ENCODE measurements at regions of chr1 and their contacts with region 1.

Region 1: GRCh38 chr1:204806943-204807687 is 63.5 kb upstream of the NFASC start:
- DNase-seq: peak; percentile 94
- ATAC-seq: peak; percentile 95
- H3K4me3 ChIP-seq: peak overlapping the region in 4 of 5 experiments; percentile 29 to 73 (median 56)
- H3K4me3 Mint-ChIP-seq: peak overlapping the region; percentile 87
- H3K27ac ChIP-seq: no peak overlapping the region
- H3K27ac Mint-ChIP-seq: peak overlapping the region; percentile 70
- H3K4me1 ChIP-seq: peaks cover 15 to 22% of the 10 kb centered on the region in 2 donors
- H3K4me1 Mint-ChIP-seq: peaks cover 18% of the 10 kb centered on the region
- H3K27me3 ChIP-seq: no peaks in the 10 kb centered on the region
- H3K27me3 Mint-ChIP-seq: peaks cover 3% of the 10 kb centered on the region
- CTCF ChIP-seq: peak; percentile 100

Region 2: GRCh38 chr1:204013052-204013451 is 794.1 kb before region 1 on chr1:
- CTCF ChIA-PET with region 1: no interaction called
- POLR2A ChIA-PET with region 1: no interaction called
- intact Hi-C with region 1: no loop called
- DNase-seq: no peak
- ATAC-seq: no peak
- H3K4me3 ChIP-seq: no peak overlapping the region
- H3K4me3 Mint-ChIP-seq: no peak overlapping the region
- H3K27ac ChIP-seq: no peak overlapping the region
- H3K27ac Mint-ChIP-seq: no peak overlapping the region
- H3K4me1 ChIP-seq: no peaks in the 10 kb centered on the region
- H3K4me1 Mint-ChIP-seq: no peaks in the 10 kb centered on the region
- H3K27me3 ChIP-seq: peaks cover 0 to 7% (median 0%) of the 10 kb centered on the region in 4 experiments
- H3K27me3 Mint-ChIP-seq: peaks cover 13% of the 10 kb centered on the region
- CTCF ChIP-seq: no peak

Region 3: DNA sequence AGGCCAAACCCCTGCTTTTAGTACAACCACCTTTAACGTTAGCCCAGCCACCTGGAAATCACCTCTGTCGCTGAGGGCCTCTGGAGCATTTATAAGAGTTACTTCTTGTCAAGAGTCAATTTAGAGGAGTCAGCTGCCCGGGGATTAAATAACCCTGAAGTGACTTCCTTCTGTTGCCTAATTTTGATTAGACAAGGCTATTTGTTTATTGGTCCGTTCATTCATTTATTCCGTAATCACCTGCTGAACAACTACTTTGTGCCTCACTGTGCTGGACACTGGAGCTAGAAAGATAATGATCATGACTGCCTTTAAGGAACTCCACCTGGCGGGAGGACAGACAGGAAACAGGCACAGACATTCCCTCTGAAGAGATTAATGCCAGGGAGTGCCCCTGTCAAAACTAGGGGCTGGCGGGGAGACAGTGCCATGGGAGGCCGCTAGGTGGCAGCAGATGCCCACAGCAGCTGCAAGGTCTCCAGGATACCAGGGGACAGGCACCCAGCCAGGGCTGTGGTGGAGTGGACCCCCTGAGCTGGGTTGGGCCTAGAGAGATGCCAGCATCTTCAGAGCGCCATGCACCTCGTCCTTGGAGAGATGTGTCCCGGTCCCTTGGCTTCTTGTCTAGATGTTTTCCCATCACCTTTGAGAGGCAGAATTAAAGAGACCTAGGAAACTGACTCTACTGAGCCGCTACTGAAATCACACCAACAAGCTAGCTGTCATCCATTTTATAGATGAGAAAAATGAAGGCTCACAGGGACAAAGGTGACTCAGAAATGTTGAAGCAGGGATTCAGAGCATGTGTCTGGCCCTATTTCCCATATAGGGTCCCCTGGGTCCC is 644.7 kb before region 1 on chr1:
- CTCF ChIA-PET with region 1: interaction called, 23 read pairs
- POLR2A ChIA-PET with region 1: no interaction called
- intact Hi-C with region 1: no loop called
- DNase-seq: peak; percentile 78
- ATAC-seq: peak; percentile 92
- H3K4me3 ChIP-seq: no peak overlapping the region
- H3K4me3 Mint-ChIP-seq: no peak overlapping the region
- H3K27ac ChIP-seq: no peak overlapping the region
- H3K27ac Mint-ChIP-seq: no peak overlapping the region
- H3K4me1 ChIP-seq: no peaks in the 10 kb centered on the region
- H3K4me1 Mint-ChIP-seq: no peaks in the 10 kb centered on the region
- H3K27me3 ChIP-seq: peaks cover 0 to 17% (median 3%) of the 10 kb centered on the region in 4 experiments
- H3K27me3 Mint-ChIP-seq: peaks cover 32% of the 10 kb centered on the region
- CTCF ChIP-seq: peak; percentile 98

Region 4: GRCh38 chr1:204177133-204177532 is 630.0 kb before region 1 on chr1:
- CTCF ChIA-PET with region 1: no interaction called
- POLR2A ChIA-PET with region 1: no interaction called
- intact Hi-C with region 1: no loop called
- DNase-seq: no peak
- ATAC-seq: no peak
- H3K4me3 ChIP-seq: no peak overlapping the region
- H3K4me3 Mint-ChIP-seq: no peak overlapping the region
- H3K27ac ChIP-seq: no peak overlapping the region
- H3K27ac Mint-ChIP-seq: no peak overlapping the region
- H3K4me1 ChIP-seq: no peaks in the 10 kb centered on the region
- H3K4me1 Mint-ChIP-seq: no peaks in the 10 kb centered on the region
- H3K27me3 ChIP-seq: peaks cover 0 to 8% (median 0%) of the 10 kb centered on the region in 4 experiments
- H3K27me3 Mint-ChIP-seq: peaks cover 15% of the 10 kb centered on the region
- CTCF ChIP-seq: no peak

Region 5: GRCh38 chr1:204494281-204495077 is 312.6 kb before region 1 on chr1 and contains the start of gene PIK3C2B:
- CTCF ChIA-PET with region 1: interaction called, 16 read pairs
- POLR2A ChIA-PET with region 1: no interaction called
- intact Hi-C with region 1: no loop called
- DNase-seq: peak; percentile 87
- ATAC-seq: peak; percentile 81
- H3K4me3 ChIP-seq: peak within 1 kb of the TSS; percentile 84 to 98 (median 92)
- H3K4me3 Mint-ChIP-seq: peak within 1 kb of the TSS; percentile 97
- H3K27ac ChIP-seq: peak within 1 kb of the TSS; percentile 78 to 79
- H3K27ac Mint-ChIP-seq: peak within 1 kb of the TSS; percentile 96
- H3K4me1 ChIP-seq: peaks cover 73 to 88% of the 10 kb centered on the region in 2 donors
- H3K4me1 Mint-ChIP-seq: peaks cover 80% of the 10 kb centered on the region
- H3K27me3 ChIP-seq: no peaks in the 10 kb centered on the region
- H3K27me3 Mint-ChIP-seq: no peaks in the 10 kb centered on the region
- CTCF ChIP-seq: peak; percentile 61
- total RNA-seq, gene PIK3C2B: 90.3 and 93.7 TPM in 2 replicates

Region 6: DNA sequence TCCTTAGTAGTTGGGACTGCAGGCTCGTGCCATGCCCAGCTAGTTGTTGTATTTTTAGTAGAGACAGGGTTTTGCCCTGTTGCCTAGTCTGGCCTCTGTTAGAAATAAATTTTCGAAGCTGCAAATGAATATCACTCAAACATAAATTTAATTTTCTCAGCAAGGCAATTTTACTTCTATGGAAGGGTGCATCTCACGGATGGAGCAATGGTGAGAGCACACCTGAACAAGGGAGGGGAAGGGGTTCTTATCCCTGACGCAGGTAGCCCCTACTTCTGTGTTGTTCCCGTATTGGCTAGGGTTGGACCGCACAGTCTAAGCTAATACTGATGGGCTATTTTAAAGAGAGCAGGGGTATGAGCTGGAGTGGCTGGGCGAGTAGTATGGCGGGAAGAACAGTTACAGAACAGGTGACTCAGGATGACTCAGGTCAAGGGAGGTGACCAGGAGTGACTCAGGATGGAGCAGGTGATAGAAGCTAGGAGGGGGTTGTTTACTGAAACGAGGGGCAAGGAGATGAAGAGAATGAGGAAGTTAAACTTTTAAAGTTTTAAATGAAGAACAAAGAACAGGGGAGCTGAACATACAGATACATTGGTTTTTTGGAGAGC is 283.4 kb before region 1 on chr1:
- CTCF ChIA-PET with region 1: interaction called, 11 read pairs
- POLR2A ChIA-PET with region 1: no interaction called
- intact Hi-C with region 1: no loop called
- DNase-seq: peak; percentile 48
- ATAC-seq: peak; percentile 19
- H3K4me3 ChIP-seq: peak overlapping the region in 1 of 5 experiments; percentile 6
- H3K4me3 Mint-ChIP-seq: peak overlapping the region; percentile 62
- H3K27ac ChIP-seq: peak overlapping the region in 1 of 2 donors; percentile 67
- H3K27ac Mint-ChIP-seq: peak overlapping the region; percentile 89
- H3K4me1 ChIP-seq: peaks cover 59 to 65% of the 10 kb centered on the region in 2 donors
- H3K4me1 Mint-ChIP-seq: peaks cover 50% of the 10 kb centered on the region
- H3K27me3 ChIP-seq: no peaks in the 10 kb centered on the region
- H3K27me3 Mint-ChIP-seq: no peaks in the 10 kb centered on the region
- CTCF ChIP-seq: no peak

Region 7: GRCh38 chr1:204565617-204566582 is 241.2 kb before region 1 on chr1:
- CTCF ChIA-PET with region 1: interaction called, 221 read pairs
- POLR2A ChIA-PET with region 1: interaction called, 4 read pairs
- intact Hi-C with region 1: no loop called
- DNase-seq: peak; percentile 85
- ATAC-seq: peak; percentile 75
- H3K4me3 ChIP-seq: no peak overlapping the region
- H3K4me3 Mint-ChIP-seq: peak overlapping the region; percentile 49
- H3K27ac ChIP-seq: peak overlapping the region; percentile 33 to 63
- H3K27ac Mint-ChIP-seq: peak overlapping the region; percentile 67
- H3K4me1 ChIP-seq: peaks cover 24 to 33% of the 10 kb centered on the region in 2 donors
- H3K4me1 Mint-ChIP-seq: peaks cover 43% of the 10 kb centered on the region
- H3K27me3 ChIP-seq: no peaks in the 10 kb centered on the region
- H3K27me3 Mint-ChIP-seq: no peaks in the 10 kb centered on the region
- CTCF ChIP-seq: peak; percentile 80

Region 8: GRCh38 chr1:204673909-204674649 is 133.0 kb before region 1 on chr1:
- CTCF ChIA-PET with region 1: no interaction called
- POLR2A ChIA-PET with region 1: no interaction called
- intact Hi-C with region 1: no loop called
- DNase-seq: no peak
- ATAC-seq: no peak
- H3K4me3 ChIP-seq: no peak overlapping the region
- H3K4me3 Mint-ChIP-seq: no peak overlapping the region
- H3K27ac ChIP-seq: no peak overlapping the region
- H3K27ac Mint-ChIP-seq: no peak overlapping the region
- H3K4me1 ChIP-seq: no peaks in the 10 kb centered on the region
- H3K4me1 Mint-ChIP-seq: no peaks in the 10 kb centered on the region
- H3K27me3 ChIP-seq: peaks cover 0 to 7% (median 2%) of the 10 kb centered on the region in 4 experiments
- H3K27me3 Mint-ChIP-seq: peaks cover 29% of the 10 kb centered on the region
- CTCF ChIP-seq: no peak

Region 9: DNA sequence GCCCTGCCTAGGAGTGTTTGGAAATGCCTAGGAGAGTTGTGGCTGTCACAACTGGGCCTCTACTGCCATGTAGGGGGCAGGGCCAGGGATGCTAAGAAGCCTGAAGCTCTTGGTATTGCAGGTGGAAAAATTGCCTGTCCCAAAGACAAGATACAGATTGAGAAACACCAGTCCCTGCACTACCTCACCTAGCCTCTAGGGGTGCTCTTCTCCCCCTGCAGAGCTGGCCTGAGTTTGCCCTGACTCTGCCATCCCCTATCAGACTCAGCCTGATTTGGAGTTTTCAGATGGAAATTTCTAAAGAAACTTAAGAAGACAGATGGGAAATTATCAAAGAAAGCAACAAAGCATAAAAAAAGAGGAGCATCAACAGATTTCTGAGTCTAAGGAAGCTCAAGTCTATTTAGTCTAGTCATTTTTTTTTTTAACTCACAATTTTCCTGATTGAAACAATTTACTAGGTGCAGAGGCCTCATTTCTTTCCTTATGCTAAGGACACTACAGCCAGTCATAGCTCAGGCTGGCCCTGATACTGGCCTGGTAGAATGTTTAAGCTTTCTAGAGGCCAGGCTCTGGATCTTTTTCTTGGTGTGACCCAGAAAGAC is 60.2 kb before region 1 on chr1:
- CTCF ChIA-PET with region 1: interaction called, 12 read pairs
- POLR2A ChIA-PET with region 1: no interaction called
- intact Hi-C with region 1: no loop called
- DNase-seq: peak; percentile 69
- ATAC-seq: peak; percentile 88
- H3K4me3 ChIP-seq: no peak overlapping the region
- H3K4me3 Mint-ChIP-seq: no peak overlapping the region
- H3K27ac ChIP-seq: no peak overlapping the region
- H3K27ac Mint-ChIP-seq: no peak overlapping the region
- H3K4me1 ChIP-seq: no peaks in the 10 kb centered on the region
- H3K4me1 Mint-ChIP-seq: no peaks in the 10 kb centered on the region
- H3K27me3 ChIP-seq: peaks cover 0 to 17% (median 1%) of the 10 kb centered on the region in 4 experiments
- H3K27me3 Mint-ChIP-seq: peaks cover 33% of the 10 kb centered on the region
- CTCF ChIP-seq: peak; percentile 96

Region 10: DNA sequence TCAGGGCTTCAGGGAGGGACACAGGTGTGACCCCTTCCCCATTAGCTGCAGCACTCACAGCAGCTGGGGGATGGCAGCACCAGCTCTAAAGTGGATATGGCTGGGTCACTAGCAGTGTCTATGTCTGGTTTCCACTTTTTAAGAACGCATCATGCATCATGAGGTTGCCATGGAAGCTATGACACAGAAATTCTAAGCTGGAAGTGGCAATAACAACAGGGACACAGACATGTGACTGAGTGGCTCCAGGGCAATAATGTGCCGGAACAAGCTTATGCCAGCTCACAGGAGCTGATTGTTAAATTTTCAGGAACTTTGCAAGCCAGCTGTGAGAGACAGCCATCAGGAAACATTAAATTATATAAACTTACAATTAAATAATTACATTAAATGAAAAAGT is 12.4 kb after region 1 on chr1:
- CTCF ChIA-PET with region 1: interaction called, 86 read pairs
- POLR2A ChIA-PET with region 1: no interaction called
- intact Hi-C with region 1: no loop called
- DNase-seq: no peak
- ATAC-seq: no peak
- H3K4me3 ChIP-seq: no peak overlapping the region
- H3K4me3 Mint-ChIP-seq: no peak overlapping the region
- H3K27ac ChIP-seq: no peak overlapping the region
- H3K27ac Mint-ChIP-seq: no peak overlapping the region
- H3K4me1 ChIP-seq: no peaks in the 10 kb centered on the region
- H3K4me1 Mint-ChIP-seq: no peaks in the 10 kb centered on the region
- H3K27me3 ChIP-seq: peaks cover 0 to 12% (median 6%) of the 10 kb centered on the region in 4 experiments
- H3K27me3 Mint-ChIP-seq: peaks cover 43% of the 10 kb centered on the region
- CTCF ChIP-seq: no peak